Activated T-helper 1 cell treated with anti-CD3 and anti-CD28 coated beads, Interleukin-12 subunit alpha, Interleukin-12 subunit beta, Interleukin-2, Interleukin-4 antibody, amounts not matched to agents 30 ng/mL and 10 ng/mL and 1 ng/mL, durations not matched to agents 14 hours and 24 hours and 36 hours (primary cell): ENCODE measurements at regions of chr20 and their contacts with region 1.

Region 1: DNA sequence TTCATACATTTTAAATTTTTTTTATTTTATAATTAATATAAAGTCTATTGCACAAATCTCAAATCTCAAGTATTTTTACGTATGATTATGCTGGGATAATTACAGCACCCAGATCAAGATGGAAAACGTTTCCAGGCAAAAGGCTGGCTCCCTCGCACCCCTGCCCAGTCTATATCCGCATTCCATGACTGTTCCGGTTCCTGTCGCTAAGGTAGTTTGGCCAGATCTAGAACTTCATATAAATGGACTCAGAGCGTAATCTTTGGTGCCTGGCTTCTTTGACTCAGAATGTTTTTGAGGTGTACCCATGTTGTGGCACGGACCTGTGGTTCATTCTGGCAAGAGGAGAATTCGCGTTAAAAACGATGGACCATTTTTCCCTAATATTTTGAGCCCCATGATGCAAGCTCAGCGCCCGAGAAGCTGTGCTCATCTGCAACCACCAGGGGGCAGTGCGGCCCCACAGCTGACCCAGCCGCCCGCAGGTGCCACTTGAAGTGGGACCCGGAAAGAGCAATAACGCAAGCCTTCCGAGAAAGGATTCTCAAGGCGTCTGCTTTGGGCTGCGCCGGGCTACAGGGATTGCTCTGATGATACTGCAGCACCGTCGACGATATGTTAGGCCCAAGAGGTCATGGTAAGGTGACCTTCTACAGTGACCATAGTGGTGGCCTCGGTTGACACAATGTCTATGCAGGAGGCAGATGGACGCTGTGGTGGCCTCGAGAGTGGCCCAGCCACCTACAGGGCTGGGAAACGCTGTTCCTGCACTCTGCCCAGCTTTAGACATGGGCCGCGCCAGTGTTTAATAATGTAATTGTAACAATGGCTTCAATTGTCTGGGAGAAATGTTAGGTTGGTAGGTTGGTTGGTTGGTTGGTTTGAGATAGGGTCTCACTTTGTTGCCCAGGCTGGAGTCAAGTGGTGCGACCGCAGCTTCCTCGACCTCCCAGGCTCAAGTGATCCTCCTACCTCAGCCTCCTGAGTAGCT is 160.1 kb downstream of the ZMYND8 start:
- DNase-seq: peak; percentile 67
- H3K4me3 Mint-ChIP-seq: no peak overlapping the region
- H3K27ac Mint-ChIP-seq: no peak overlapping the region
- H3K4me1 Mint-ChIP-seq: peaks cover 16% of the 10 kb centered on the region
- H3K27me3 Mint-ChIP-seq: peaks cover 3% of the 10 kb centered on the region

Region 2: GRCh38 chr20:46870041-46870440 is 326.3 kb before region 1 on chr20:
- intact Hi-C with region 1: no loop called
- DNase-seq: no peak
- H3K4me3 Mint-ChIP-seq: no peak overlapping the region
- H3K27ac Mint-ChIP-seq: no peak overlapping the region
- H3K4me1 Mint-ChIP-seq: no peaks in the 10 kb centered on the region
- H3K27me3 Mint-ChIP-seq: peaks cover 1% of the 10 kb centered on the region

Region 3: DNA sequence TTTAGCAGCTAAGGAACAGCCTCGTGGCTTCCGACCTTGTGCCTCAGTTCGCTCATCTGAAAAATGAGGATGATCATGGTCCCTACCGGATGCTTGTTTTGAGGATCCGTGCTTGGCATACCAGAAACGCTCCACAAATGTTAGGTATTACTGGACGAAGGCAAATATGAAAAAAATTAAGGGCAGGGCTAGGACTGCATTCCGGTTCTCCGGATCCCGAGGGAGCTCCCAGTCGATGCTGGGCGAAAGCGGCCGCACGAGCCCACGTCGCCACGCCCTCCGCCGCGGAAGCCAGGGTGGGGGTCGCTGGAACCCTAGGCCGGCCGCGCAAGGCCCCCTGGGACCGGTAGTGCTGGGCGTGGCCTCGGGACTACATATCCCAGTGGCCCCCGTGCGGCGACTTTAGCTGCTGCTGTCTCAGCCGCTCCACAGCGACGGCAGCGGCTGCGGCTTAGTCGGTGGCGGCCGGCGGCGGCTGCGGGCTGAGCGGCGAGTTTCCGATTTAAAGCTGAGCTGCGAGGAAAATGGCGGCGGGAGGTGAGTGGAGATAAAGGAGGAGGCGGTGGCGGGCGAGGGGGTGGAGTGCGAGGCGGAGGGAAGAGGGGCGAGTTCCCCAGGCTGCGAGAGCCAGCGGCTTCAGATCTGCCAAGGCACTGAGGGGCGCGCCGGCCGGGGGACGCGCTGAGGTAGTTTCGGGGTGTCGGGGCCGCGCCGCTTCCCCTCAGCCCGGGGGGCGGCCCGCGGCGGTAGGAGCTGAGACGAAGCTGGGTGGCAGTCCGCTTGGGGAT is 305.3 kb after region 1 on chr20 and contains the start of gene NCOA3:
- intact Hi-C with region 1: loop called (anchors 5 kb)
- DNase-seq: peak; percentile 89
- H3K4me3 Mint-ChIP-seq: peak within 1 kb of the TSS; percentile 92
- H3K27ac Mint-ChIP-seq: peak within 1 kb of the TSS; percentile 99
- H3K4me1 Mint-ChIP-seq: peaks cover 61% of the 10 kb centered on the region
- H3K27me3 Mint-ChIP-seq: no peaks in the 10 kb centered on the region
- total RNA-seq, gene NCOA3: 132 and 133 TPM in 2 replicates

Region 4: GRCh38 chr20:47620808-47621805 is 424.7 kb after region 1 on chr20:
- intact Hi-C with region 1: loop called (anchors 2 kb)
- DNase-seq: no peak
- H3K4me3 Mint-ChIP-seq: no peak overlapping the region
- H3K27ac Mint-ChIP-seq: peak overlapping the region; percentile 19
- H3K4me1 Mint-ChIP-seq: peaks cover 51% of the 10 kb centered on the region
- H3K27me3 Mint-ChIP-seq: no peaks in the 10 kb centered on the region

Region 5: GRCh38 chr20:47725248-47725973 is 529.0 kb after region 1 on chr20:
- intact Hi-C with region 1: loop called (anchors 5 kb)
- DNase-seq: peak; percentile 81
- H3K4me3 Mint-ChIP-seq: no peak overlapping the region
- H3K27ac Mint-ChIP-seq: peak overlapping the region; percentile 14
- H3K4me1 Mint-ChIP-seq: peaks cover 46% of the 10 kb centered on the region
- H3K27me3 Mint-ChIP-seq: no peaks in the 10 kb centered on the region

Region 6: GRCh38 chr20:48620519-48621254 is 1424.3 kb after region 1 on chr20:
- intact Hi-C with region 1: loop called (anchors 5 kb)
- DNase-seq: peak; percentile 56
- H3K4me3 Mint-ChIP-seq: peak overlapping the region; percentile 30
- H3K27ac Mint-ChIP-seq: peak overlapping the region; percentile 13
- H3K4me1 Mint-ChIP-seq: peaks cover 5% of the 10 kb centered on the region
- H3K27me3 Mint-ChIP-seq: no peaks in the 10 kb centered on the region